Left ventricle myocardium superior (tissue), 1 donor: ENCODE measurements at regions of chr14 and their contacts with region 1.

Region 1: DNA sequence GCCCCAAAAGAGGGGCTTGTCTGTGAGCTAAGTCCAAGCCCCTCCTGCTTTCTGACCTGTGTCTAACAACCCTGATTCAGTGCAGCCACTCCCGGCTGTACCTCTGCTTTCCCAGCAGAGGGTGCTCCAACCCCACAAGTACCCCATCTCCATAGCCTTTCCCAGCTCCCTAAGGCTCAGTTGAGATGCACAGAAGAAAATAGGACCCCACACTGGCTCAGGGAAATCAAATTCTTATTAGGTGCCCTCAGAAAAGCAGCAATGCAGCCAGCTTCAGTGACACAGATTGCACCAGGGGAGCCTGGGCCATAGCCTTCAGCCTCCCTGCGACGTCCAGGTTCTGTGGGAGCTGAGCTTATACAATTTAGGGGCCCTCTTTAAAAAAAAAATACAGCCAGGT is 49.9 kb downstream of the LRRC74A start:
- DNase-seq: peak; percentile 61
- ATAC-seq: peak; percentile 90

Region 2: GRCh38 chr14:76985540-76986230 is 109.6 kb after region 1 on chr14:
- intact Hi-C with region 1: no loop called
- DNase-seq: no peak
- ATAC-seq: no peak

Region 3: DNA sequence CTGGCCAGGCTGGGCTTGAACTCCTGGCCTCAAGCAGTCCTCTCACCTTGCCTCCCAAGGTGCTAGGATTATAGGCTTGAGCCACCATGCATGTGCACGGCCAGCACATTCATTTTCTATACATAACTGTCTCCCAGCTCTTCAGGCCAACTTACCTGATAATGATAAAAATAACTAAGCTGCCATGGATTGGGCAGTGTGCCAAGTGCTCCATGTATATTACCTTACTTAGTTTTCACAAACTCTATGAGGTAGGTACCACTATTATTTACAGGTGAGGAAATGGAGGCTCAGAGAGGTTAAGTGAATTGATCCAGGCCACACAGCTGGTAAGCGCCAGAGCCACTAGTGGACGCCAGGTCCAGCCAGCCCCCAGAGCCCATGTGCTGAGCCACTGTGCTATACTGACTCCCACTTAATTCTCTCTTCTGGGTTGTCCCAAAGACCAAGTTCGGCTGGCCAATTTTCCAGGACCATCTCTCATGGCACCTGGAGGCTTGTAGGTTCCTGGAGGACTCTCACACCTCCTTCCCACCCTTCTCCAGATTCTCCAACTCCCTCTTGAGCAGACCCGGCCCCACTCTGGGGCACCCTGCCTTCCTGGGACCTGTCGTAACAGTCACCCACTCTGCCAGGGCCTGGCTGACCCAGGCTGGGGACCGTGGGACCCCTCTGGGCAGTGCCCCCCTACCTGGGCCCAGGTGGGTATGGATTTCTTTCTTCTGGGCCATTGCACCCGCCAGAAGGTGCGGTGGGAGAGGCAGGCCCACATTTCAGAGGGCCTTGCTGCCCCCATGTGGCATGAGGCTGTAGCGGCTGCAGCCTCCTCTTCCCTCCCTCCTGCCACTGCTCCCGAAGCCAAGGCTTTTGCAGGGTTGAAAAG is 191.8 kb after region 1 on chr14:
- intact Hi-C with region 1: loop called (anchors 5 kb)
- DNase-seq: peak; percentile 83
- ATAC-seq: peak; percentile 82

Region 4: GRCh38 chr14:77314043-77314442 is 438.0 kb after region 1 on chr14:
- intact Hi-C with region 1: loop called (anchors 10 kb)
- DNase-seq: no peak
- ATAC-seq: no peak